Breast epithelium (tissue), 4 donors: ENCODE measurements at regions of chr11 and their contacts with region 1.

Region 1: GRCh38 chr11:5887172-5887571 is 5.8 kb upstream of the OR52E5 start:
- DNase-seq: no peak
- H3K4me3 ChIP-seq: no peak overlapping the region
- H3K27ac ChIP-seq: no peak overlapping the region
- H3K4me1 ChIP-seq: no peaks in the 10 kb centered on the region
- H3K27me3 ChIP-seq: no peaks in the 10 kb centered on the region
- CTCF ChIP-seq: no peak
- POLR2A ChIP-seq: no peak

Region 2: GRCh38 chr11:6473481-6474422 is 586.6 kb after region 1 on chr11 and contains the start of gene TRIM3:
- intact Hi-C with region 1: loop called (anchors 5 kb)
- DNase-seq: peak; percentile 92 to 96
- H3K4me3 ChIP-seq: peak within 1 kb of the TSS; percentile 75 to 89 (median 79)
- H3K27ac ChIP-seq: peak within 1 kb of the TSS; percentile 97 to 98
- H3K4me1 ChIP-seq: peaks cover 11 to 13% of the 10 kb centered on the region in 2 donors
- H3K27me3 ChIP-seq: no peaks in the 10 kb centered on the region
- CTCF ChIP-seq: no peak
- POLR2A ChIP-seq: peak; percentile 48
- total RNA-seq, gene TRIM3: 21.6 to 43.9 (median 32.6) TPM

Region 3: DNA sequence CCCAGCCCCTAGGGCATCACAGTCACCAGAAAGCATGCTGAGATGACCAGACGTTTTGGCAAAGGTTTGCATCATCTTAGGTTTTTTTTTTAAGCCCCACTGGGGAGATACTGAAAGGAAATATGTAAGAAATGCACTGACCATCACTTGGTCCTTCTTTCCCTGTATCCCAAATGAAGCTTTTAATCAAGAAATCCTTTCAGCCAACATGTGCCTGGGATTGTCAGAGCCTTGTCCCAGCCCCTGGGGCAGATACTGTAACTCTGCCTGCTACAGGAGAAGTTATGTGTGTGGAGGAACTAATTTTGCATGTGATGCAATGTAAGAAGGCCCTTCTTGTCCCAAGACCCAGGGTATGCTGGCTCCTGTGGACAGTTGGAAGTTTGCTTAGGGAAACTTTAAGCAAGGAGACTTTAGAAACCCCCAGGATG is 1692.2 kb after region 1 on chr11:
- intact Hi-C with region 1: no loop called
- DNase-seq: no peak
- H3K4me3 ChIP-seq: no peak overlapping the region
- H3K27ac ChIP-seq: peak overlapping the region; percentile 85 to 91
- H3K4me1 ChIP-seq: peaks cover 26 to 34% of the 10 kb centered on the region in 2 donors
- H3K27me3 ChIP-seq: no peaks in the 10 kb centered on the region
- CTCF ChIP-seq: no peak
- POLR2A ChIP-seq: no peak